K562 (cell line): ENCODE measurements at regions of chr6 and their contacts with region 1.

Region 1: DNA sequence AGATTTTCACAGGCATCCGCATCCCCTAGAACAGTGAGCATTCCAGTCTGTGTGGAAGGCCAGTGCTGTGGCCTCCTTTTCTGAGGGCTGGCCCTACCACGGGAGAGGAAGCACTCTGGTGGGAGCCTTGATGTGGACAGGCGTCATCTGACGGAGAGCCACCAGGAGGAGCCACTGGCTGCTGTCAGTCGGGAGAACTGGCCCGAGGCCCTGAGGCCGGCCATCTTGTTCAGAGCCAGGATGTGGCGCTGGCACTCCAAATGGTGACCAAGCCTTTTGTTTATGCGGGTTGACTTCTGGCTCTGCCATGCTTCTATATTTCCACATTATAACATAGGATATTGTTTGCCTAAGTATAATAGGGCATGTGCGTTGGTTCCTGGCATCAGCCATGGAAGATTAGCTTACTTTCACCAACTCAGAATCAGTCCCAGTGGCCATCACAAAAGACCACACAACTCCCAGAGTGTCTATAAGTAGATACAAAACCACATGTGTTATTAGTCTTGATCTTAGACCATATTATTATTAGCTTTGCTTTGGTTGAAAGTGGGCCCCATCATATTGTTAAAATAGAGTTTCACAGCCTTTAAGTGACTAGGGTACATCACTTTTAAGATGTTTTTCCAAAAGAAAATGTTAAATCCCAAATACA is 273.9 kb upstream of the TAB2 start:
- DNase-seq: peak; percentile 68 to 78 (median 74)
- ATAC-seq: peak; percentile 99
- H3K4me3 ChIP-seq: no peak overlapping the region
- H3K27ac ChIP-seq: no peak overlapping the region
- H3K4me1 ChIP-seq: no peaks in the 10 kb centered on the region
- H3K27me3 ChIP-seq: peaks cover 18 to 26% of the 10 kb centered on the region in 2 experiments; a peak in 4 of 5 replicates
- CTCF ChIP-seq: peak; percentile 80 to 95 (median 87)
- EP300 ChIP-seq: no peak
- POLR2A ChIP-seq: no peak
- RAD21 ChIP-seq: peak; percentile 76 to 91

Region 2: DNA sequence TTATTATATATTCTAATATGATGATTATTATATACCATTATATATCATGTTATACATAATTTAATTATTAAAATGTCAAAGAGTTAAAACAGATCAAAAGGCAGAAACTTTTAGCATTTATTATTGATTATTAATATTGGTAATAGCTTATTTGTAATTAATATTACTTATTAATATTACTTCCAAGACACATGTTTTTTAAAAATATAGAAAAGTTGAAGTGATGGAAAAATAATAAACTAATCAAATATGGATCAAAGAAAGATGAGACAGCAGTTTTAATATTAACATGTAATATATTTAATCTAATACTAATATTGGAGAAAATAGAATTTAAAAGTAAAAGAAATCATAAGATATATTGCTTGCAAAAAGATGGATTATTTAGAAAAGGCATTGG is 119.3 kb after region 1 on chr6:
- CTCF ChIA-PET with region 1: no interaction called
- POLR2A ChIA-PET with region 1: no interaction called
- in situ Hi-C with region 1: no loop called
- intact Hi-C with region 1: loop called (anchors 1 kb)
- DNase-seq: no peak
- ATAC-seq: no peak
- H3K4me3 ChIP-seq: no peak overlapping the region
- H3K27ac ChIP-seq: no peak overlapping the region
- H3K4me1 ChIP-seq: peaks cover 0 to 3% of the 10 kb centered on the region in 2 experiments; a peak in 1 of 5 replicates
- H3K27me3 ChIP-seq: no peaks in the 10 kb centered on the region
- CTCF ChIP-seq: no peak
- EP300 ChIP-seq: no peak
- POLR2A ChIP-seq: no peak
- RAD21 ChIP-seq: no peak

Region 3: DNA sequence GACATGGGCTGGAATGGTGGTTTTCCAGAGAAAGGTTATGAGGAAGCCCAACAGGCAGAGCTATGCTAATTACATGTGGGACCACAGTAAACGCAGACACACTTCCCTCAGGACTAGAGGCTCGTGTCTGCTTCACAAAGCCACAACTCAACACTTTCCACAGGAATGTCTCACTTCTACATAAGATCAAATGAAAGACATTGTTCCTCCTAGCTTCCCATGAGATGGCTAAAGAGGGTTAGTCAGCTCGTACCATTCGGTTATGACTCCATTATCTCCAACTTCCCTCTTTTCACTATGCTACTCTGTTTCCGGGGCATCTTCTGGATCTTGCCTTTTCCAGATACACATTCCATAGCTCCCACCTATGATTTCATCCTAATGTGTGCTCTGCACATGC is 470.3 kb after region 1 on chr6:
- CTCF ChIA-PET with region 1: no interaction called
- POLR2A ChIA-PET with region 1: no interaction called
- in situ Hi-C with region 1: no loop called
- intact Hi-C with region 1: loop called (anchors 5 kb)
- DNase-seq: no peak
- ATAC-seq: no peak
- H3K4me3 ChIP-seq: no peak overlapping the region
- H3K27ac ChIP-seq: no peak overlapping the region
- H3K4me1 ChIP-seq: no peaks in the 10 kb centered on the region
- H3K27me3 ChIP-seq: no peaks in the 10 kb centered on the region
- CTCF ChIP-seq: no peak
- EP300 ChIP-seq: no peak
- POLR2A ChIP-seq: no peak
- RAD21 ChIP-seq: no peak